Activated CD8-positive, alpha-beta T cell treated with anti-CD3 and anti-CD28 coated beads for 36 hours (primary cell): ENCODE measurements at regions of chr11 and their contacts with region 1.

Region 1: GRCh38 chr11:17014838-17015626 is 818 bp upstream of the PLEKHA7 start:
- DNase-seq: peak; percentile 33
- ATAC-seq: peak; percentile 66
- H3K4me3 Mint-ChIP-seq: peak overlapping the region; percentile 80
- H3K27ac Mint-ChIP-seq: peak overlapping the region; percentile 30
- H3K4me1 Mint-ChIP-seq: peaks cover 4% of the 10 kb centered on the region
- H3K27me3 Mint-ChIP-seq: peaks cover 18% of the 10 kb centered on the region
- CTCF ChIP-seq: peak; percentile 63

Region 2: GRCh38 chr11:16958833-16959232 is 56.2 kb before region 1 on chr11:
- CTCF ChIA-PET with region 1: no interaction called
- POLR2A ChIA-PET with region 1: no interaction called
- intact Hi-C with region 1: no loop called
- DNase-seq: no peak
- ATAC-seq: no peak
- H3K4me3 Mint-ChIP-seq: no peak overlapping the region
- H3K27ac Mint-ChIP-seq: no peak overlapping the region
- H3K4me1 Mint-ChIP-seq: peaks cover 7% of the 10 kb centered on the region
- H3K27me3 Mint-ChIP-seq: no peaks in the 10 kb centered on the region
- CTCF ChIP-seq: no peak

Region 3: DNA sequence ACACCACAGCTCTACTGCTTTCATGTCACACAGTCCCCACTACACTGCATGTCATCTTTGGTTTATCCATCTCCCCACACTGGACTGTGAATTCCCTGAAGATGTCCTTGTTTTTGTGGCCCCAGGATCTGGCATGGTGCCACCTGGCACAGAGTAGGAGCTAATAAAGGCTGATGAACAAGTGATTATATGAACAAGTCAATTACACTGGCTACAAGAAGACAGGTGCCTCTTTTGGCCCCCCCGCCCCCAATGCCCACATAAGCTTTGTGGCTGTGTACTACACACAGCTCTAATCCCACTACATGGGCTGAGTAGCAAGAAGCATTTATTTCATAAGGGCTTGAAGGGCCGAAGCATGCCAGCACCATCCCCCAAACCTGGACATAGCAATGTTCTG is 25.5 kb before region 1 on chr11:
- CTCF ChIA-PET with region 1: interaction called, 12 read pairs
- POLR2A ChIA-PET with region 1: no interaction called
- intact Hi-C with region 1: no loop called
- DNase-seq: no peak
- ATAC-seq: no peak
- H3K4me3 Mint-ChIP-seq: no peak overlapping the region
- H3K27ac Mint-ChIP-seq: no peak overlapping the region
- H3K4me1 Mint-ChIP-seq: peaks cover 32% of the 10 kb centered on the region
- H3K27me3 Mint-ChIP-seq: no peaks in the 10 kb centered on the region
- CTCF ChIP-seq: no peak

Region 4: DNA sequence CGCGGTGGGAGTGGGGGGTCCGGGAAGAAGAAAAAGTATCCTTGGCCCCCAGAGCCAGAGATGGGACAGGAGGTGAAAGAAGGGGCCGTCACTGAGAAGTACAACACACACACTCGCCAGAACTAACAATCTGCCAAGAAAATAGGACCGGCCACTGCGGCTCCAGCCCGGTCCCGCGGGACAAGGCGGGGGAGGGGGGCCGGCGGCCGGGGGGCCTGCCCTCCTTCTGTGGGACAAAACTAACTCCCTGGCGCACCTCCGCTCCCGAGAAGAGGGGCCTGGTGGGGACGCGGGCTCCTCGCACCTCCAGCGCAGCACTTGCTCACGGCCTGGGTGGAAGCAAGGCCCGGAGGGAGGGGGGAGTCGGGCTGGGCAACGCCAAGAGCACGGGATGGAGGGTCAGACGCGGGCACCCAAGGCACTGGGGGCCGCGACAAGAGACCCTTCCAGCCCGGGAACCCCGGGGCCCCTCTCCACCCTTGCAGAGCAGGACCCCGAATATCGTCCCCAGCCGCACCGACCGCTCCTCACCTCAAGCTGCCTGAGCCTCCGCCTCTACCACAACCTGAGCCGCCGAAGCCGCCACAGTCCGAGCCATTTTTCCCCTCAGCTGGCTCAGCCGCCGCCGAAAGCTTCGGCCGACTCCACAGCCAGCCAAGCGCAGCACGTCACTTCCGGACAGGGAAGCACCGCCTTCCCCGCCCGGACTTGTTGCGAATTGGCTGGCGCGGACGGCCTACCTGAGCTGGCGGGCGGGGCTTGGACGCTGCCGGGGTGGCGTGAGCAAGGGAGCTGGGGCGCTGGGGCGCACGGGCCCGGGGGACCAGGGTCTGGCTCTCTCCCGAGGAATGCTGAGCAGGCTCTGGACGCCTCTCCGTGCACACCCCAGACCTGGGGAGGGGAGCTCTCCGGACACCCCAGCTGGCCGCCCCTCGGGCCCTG is 192.6 kb after region 1 on chr11 and contains the start of gene PIK3C2A:
- CTCF ChIA-PET with region 1: no interaction called
- POLR2A ChIA-PET with region 1: no interaction called
- intact Hi-C with region 1: no loop called
- DNase-seq: peak; percentile 98
- ATAC-seq: peak; percentile 97
- H3K4me3 Mint-ChIP-seq: peak within 1 kb of the TSS; percentile 82
- H3K27ac Mint-ChIP-seq: peak within 1 kb of the TSS; percentile 98
- H3K4me1 Mint-ChIP-seq: peaks cover 43% of the 10 kb centered on the region
- H3K27me3 Mint-ChIP-seq: no peaks in the 10 kb centered on the region
- CTCF ChIP-seq: no peak
- total RNA-seq, gene PIK3C2A: 24.1 to 29.3 TPM